CD8-positive, alpha-beta T cell (primary cell): ENCODE measurements at regions of chr17 and their contacts with region 1.

Region 1: DNA sequence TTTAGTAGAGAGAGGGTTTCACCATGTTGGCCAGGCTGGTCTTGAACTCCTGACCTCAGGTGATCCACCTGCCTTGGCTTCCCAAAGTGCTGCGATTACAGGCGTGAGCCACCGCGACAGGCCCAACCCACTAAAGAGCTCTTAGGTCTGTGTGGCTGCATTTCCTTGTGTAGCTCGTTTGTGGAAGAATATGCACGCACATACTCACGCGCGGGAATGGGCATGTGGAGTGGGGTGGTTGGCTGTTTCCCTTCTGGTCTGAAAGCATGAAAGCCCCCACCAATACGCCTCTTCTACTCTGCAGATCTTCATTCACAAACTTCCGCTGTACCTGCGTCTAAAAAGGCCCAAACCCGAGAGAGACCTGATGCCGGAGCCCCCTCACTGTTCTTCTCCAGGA is 10.1 kb downstream of the CHRNB1 start:
- DNase-seq: no peak
- ATAC-seq: peak; percentile 35
- H3K4me3 ChIP-seq: peak overlapping the region; percentile 82 to 83
- H3K4me3 Mint-ChIP-seq: peak overlapping the region; percentile 98
- H3K27ac ChIP-seq: peak overlapping the region; percentile 60 to 74
- H3K27ac Mint-ChIP-seq: peak overlapping the region; percentile 91
- H3K4me1 ChIP-seq: peaks cover 15% of the 10 kb centered on the region
- H3K4me1 Mint-ChIP-seq: peaks cover 24% of the 10 kb centered on the region
- H3K27me3 ChIP-seq: no peaks in the 10 kb centered on the region
- H3K27me3 Mint-ChIP-seq: no peaks in the 10 kb centered on the region
- CTCF ChIP-seq: no peak

Region 2: DNA sequence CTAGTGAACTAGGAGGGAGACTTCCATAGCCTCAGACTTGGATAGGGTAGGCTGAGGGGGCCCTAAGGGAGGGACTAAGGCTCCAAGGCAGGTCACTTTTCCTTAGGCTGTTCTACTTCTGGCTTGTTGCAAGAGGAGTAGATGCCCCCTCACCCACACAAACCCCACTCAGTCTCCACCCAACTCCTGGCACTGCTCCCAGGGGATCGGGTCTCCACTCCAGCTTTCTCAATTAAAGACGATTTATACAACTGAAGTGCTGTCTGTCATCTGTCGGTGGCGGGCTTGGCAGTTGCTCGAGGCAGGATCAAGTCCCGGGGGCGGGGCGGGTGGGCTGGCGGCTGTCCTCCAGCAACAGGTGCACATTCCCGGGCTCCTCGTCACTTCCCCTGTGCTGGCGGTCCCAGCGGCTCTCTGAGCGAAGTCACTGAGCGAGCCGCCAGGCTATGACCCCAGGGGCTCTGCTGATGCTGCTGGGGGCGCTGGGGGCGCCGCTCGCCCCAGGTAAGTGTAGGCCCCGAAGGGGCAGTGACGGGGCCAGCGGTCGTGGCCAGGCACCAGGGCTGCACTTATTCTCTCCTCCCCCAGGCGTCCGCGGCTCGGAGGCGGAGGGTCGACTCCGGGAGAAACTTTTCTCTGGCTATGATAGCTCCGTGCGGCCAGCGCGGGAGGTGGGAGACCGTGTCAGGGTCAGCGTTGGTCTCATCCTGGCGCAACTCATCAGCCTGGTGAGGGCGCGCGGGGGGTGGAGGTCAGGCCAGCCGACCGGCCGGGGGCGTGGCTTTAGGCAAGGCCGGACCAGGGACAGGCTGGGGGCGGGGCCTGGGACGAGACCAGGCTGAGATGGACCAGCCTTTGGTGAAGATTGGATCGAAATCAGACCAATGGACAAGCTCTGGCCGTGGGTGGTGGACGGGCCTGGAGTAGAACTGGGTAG is 10.0 kb before region 1 on chr17 and contains the start of gene CHRNB1:
- CTCF ChIA-PET with region 1: interaction called, 3 read pairs
- POLR2A ChIA-PET with region 1: interaction called, 20 read pairs
- intact Hi-C with region 1: loop called in 1 of 2 experiments (anchors 1 kb)
- DNase-seq: peak in 3 of 9 experiments; percentile 29 to 47 (median 30)
- ATAC-seq: peak; percentile 14
- H3K4me3 ChIP-seq: peak within 1 kb of the TSS; percentile 32 to 37
- H3K4me3 Mint-ChIP-seq: peak within 1 kb of the TSS; percentile 84
- H3K27ac ChIP-seq: no peak within 1 kb of the TSS
- H3K27ac Mint-ChIP-seq: no peak within 1 kb of the TSS
- H3K4me1 ChIP-seq: peaks cover 32% of the 10 kb centered on the region
- H3K4me1 Mint-ChIP-seq: peaks cover 30% of the 10 kb centered on the region
- H3K27me3 ChIP-seq: peaks cover 14 to 38% of the 10 kb centered on the region in 2 experiments
- H3K27me3 Mint-ChIP-seq: peaks cover 45% of the 10 kb centered on the region
- CTCF ChIP-seq: no peak
- total RNA-seq, gene CHRNB1: 3.0 to 4.5 TPM